ENCODE measurements at regions of chr14 and their contacts with region 1.

Region 1: DNA sequence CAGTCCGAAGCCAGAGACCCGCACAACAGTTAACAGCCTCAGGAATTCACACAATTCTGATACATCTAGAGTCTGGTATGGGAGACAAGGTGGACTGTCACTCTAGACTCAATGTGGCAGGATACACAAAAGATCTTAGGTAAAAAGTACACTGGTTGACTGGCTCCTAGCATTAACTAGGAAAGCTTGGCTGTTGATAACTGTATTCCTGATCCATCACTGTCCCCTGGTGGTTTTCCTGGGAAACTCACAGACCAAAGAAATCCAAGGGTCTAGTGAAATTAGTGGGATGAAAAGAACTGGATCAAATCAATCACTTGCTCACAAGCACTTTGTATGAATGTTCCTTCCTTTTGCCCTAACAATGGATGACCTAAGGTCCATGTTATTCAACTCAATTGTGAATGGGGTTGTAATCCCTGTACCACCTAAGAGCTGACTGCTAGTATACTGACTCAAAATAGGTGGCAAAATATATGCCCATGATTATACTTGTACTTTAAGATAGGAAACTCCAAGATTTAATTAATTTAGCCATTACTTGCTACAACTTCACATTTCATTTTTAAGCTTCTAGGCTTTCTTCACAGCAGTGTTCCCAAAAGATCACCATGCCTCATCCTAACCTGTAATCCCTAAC is 14.0 kb downstream of the NPC2 start:
- DNase-seq: peak in 1 of 4 experiments; percentile 13
- ATAC-seq: no peak
- H3K4me3 ChIP-seq: no peak overlapping the region
- H3K27ac ChIP-seq: no peak overlapping the region
- H3K4me1 ChIP-seq: no peaks in the 10 kb centered on the region
- H3K27me3 ChIP-seq: no peaks in the 10 kb centered on the region
- CTCF ChIP-seq: peak; percentile 46 to 70 (median 56)
- EP300 ChIP-seq: no peak
- POLR2A ChIP-seq: no peak
- RAD21 ChIP-seq: peak in 1 of 2 experiments; percentile 72; a peak in 3 of 4 replicates

Region 2: DNA sequence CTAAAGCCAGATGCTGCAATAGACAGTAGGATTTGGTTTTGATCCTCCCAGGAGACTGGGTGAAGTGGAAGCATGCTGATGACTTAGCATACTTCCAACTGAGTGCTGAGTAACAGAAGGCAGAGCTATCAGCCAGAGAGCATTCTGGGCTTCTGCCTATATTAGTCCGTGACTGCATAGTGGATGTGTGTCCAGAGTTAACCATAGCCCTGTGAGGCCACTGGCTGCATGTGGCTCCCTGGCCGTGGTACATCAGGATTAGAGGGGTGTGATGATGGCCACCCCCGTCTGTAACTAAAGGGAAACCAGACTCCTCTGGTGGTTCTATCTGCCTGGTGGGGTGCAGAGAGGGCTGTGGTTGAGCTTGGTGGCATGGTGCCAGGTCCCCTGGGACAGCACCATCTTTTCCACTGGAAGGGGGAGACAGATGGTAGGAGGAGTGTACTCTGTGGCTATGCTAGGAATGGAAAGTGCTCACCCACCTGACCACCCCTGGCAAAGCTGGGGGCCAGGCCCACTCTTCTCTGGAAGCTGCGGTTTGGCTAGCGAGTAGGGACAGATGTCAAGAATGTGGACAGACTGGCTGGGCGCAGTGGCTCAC is 203.8 kb before region 1 on chr14:
- CTCF ChIA-PET with region 1: no interaction called
- POLR2A ChIA-PET with region 1: no interaction called
- in situ Hi-C with region 1: no loop called
- intact Hi-C with region 1: no loop called
- DNase-seq: peak in 2 of 4 experiments; percentile 28 to 48
- ATAC-seq: peak; percentile 92
- H3K4me3 ChIP-seq: no peak overlapping the region
- H3K27ac ChIP-seq: peak overlapping the region; percentile 22; the same call in 1 of the 3 replicates
- H3K4me1 ChIP-seq: peaks cover 0 to 3% of the 10 kb centered on the region in 2 experiments; a peak in 3 of 5 replicates
- H3K27me3 ChIP-seq: no peaks in the 10 kb centered on the region
- CTCF ChIP-seq: no peak
- EP300 ChIP-seq: no peak
- POLR2A ChIP-seq: no peak
- RAD21 ChIP-seq: no peak

Region 3: DNA sequence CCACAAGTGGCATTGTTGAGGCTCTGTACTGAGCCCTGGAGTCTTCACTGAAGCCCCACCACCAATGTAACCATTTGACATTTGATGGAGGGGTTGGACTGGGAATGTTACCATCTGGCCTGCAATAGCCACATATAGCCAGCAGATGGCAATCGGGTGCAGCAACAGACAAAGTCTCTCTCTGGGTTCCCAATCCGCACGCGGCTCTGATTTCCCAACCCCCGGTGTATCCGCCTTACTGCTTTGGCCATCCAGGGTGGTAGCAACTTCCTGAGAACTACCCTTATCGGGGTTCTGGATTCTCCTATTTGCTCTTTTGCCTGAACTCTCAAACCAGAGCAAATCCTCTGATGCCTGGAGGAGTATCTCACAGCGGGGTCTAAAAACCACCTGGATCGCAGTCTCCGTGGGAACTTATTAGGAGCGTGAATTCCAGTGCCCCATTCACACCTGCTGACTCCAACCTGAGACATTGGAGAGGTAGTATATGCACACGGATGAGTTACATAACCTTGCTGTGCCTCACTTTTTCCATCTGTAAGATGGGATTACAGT is 116.7 kb before region 1 on chr14:
- CTCF ChIA-PET with region 1: interaction called, 6 read pairs
- POLR2A ChIA-PET with region 1: no interaction called
- in situ Hi-C with region 1: loop called (anchors 10 kb)
- intact Hi-C with region 1: loop called (anchors 1 kb)
- DNase-seq: peak; percentile 67 to 74 (median 70)
- ATAC-seq: peak; percentile 90
- H3K4me3 ChIP-seq: no peak overlapping the region
- H3K27ac ChIP-seq: no peak overlapping the region
- H3K4me1 ChIP-seq: peaks cover 0 to 3% of the 10 kb centered on the region in 2 experiments; a peak in 1 of 5 replicates
- H3K27me3 ChIP-seq: peaks cover 9 to 27% of the 10 kb centered on the region in 2 experiments; a peak in 4 of 5 replicates
- CTCF ChIP-seq: peak; percentile 75 to 84 (median 77)
- EP300 ChIP-seq: no peak
- POLR2A ChIP-seq: no peak
- RAD21 ChIP-seq: peak; percentile 53 to 81

Region 4: GRCh38 chr14:74501135-74501614 is 22.1 kb after region 1 on chr14:
- CTCF ChIA-PET with region 1: no interaction called
- POLR2A ChIA-PET with region 1: no interaction called
- in situ Hi-C with region 1: no loop called
- intact Hi-C with region 1: no loop called
- DNase-seq: peak; percentile 19 to 60 (median 32)
- ATAC-seq: peak; percentile 89
- H3K4me3 ChIP-seq: no peak overlapping the region
- H3K27ac ChIP-seq: no peak overlapping the region
- H3K4me1 ChIP-seq: peaks cover 0 to 7% of the 10 kb centered on the region in 2 experiments; a peak in 1 of 5 replicates
- H3K27me3 ChIP-seq: peaks cover 0 to 23% of the 10 kb centered on the region in 2 experiments; a peak in 2 of 5 replicates
- CTCF ChIP-seq: peak; percentile 64 to 69 (median 65)
- EP300 ChIP-seq: no peak
- POLR2A ChIP-seq: no peak
- RAD21 ChIP-seq: peak; percentile 7 to 52; a peak in 2 of 4 replicates

Region 5: DNA sequence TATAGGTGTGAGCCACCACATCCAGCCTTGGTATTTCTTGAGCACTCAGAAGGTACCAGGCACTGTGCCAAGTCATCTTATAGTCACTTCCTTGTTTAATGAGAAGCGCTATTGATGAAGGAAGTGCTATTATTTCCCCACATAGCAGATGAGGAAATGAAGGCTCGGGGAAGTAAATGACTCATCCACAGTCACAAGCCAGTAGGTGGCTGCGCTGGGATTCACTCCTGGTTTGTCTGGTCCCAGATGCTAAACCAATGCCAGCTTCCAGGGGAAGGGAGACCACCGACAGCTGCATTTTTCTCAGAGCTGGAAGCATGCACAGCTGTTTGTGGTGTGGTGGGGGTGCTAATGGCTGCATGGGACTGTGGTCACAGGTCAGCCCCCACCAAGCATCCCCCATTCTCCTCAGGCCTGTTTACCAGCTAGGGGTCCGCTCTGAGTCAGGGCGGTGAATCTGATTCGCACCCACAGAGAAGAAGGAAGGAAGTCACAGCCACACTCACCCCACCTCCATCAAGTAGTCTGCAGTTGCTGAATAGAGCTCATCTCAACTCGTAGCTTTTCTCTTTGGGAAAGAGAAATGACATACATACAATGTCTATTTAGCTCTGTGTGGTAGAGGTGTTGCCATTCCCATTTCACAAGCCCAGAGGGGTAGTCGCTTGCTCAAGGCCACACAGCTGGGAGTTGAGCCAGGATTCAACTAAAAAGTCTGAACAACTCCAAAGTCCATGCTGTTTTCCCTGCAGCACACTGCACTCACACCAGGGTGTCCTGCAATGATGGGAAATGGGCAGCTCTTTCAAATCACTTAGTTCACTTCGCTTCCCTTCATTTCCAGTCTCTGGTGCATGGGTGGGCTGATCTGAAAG is 139.2 kb after region 1 on chr14:
- CTCF ChIA-PET with region 1: no interaction called
- POLR2A ChIA-PET with region 1: no interaction called
- in situ Hi-C with region 1: no loop called
- intact Hi-C with region 1: no loop called
- DNase-seq: no peak
- ATAC-seq: no peak
- H3K4me3 ChIP-seq: no peak overlapping the region
- H3K27ac ChIP-seq: no peak overlapping the region
- H3K4me1 ChIP-seq: peaks cover 26 to 35% of the 10 kb centered on the region in 2 experiments
- H3K27me3 ChIP-seq: no peaks in the 10 kb centered on the region
- CTCF ChIP-seq: no peak
- EP300 ChIP-seq: no peak
- POLR2A ChIP-seq: no peak
- RAD21 ChIP-seq: no peak

Measured in K562 (cell line).